ENCODE measurements at regions of chrX and their contacts with region 1.

Region 1: DNA sequence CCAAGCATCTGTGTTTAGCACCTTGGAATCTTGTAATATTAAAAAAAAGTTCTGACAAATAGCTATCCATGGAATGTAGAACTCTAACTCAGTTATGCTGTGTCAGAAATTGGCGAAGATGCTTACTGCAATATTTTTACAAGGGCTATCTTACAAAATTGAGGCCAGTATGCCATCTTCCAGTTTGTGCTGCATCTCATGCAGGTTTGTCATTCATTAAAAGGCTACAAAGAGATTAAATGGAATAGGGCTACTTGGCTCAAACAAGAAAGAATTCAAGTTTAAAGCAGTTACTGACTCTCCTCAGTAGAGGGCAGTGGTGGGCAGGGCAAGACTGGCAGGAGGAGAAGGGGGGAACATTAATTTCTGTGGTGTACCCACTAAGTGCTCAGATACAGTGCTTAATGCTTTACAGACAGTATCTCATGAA is 66.5 kb downstream of the SHROOM4 start:
- DNase-seq: no peak
- H3K4me3 ChIP-seq: no peak overlapping the region
- H3K27ac ChIP-seq: no peak overlapping the region
- H3K4me1 ChIP-seq: no peaks in the 10 kb centered on the region
- H3K27me3 ChIP-seq: peaks cover 0 to 34% of the 10 kb centered on the region in 2 donors
- CTCF ChIP-seq: peak in 2 of 3 donors; percentile 30 to 46
- POLR2A ChIP-seq: no peak

Region 2: DNA sequence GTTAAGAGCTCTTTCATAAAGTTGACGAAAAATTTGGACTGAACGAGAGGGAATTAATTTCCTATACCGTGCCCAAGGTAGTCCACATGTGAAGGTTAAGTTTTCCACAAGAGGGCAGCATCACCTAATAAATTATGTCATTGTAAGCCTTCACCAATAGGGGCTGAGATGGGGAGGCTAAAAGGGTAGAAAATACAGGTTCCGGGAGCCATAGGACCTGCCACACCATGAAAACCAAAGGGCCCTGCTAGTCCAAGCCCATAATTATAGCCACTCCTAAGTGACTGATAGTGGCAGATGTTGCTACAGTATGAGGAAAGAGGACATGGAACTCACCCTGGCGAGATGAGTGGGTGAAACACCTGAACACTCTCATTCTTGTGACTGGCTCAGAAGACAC is 55.7 kb before region 1 on chrX:
- intact Hi-C with region 1: no loop called
- DNase-seq: no peak
- H3K4me3 ChIP-seq: no peak overlapping the region
- H3K27ac ChIP-seq: no peak overlapping the region
- H3K4me1 ChIP-seq: no peaks in the 10 kb centered on the region
- H3K27me3 ChIP-seq: peaks cover 0 to 36% of the 10 kb centered on the region in 2 donors
- CTCF ChIP-seq: peak; percentile 68 to 70 (median 69)
- POLR2A ChIP-seq: no peak

Region 3: DNA sequence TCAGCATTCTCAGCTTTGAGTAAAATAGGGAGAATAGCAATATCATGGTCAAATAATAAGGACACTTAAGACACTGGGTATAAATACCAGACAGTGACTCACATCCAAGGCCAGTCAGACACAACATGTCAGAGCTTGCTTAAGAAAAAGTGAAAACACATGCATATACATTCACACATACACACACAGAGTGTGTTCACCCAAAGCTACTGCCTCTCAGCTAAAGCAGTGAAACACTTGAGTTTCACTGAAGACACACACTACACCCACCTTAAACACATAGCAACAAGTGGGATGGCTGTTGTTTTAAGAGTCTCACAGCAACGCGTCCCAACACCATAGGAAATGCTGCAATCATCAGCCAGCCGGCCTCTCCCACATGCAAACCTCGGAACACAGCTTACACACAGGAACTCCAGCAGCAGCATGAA is 52.1 kb after region 1 on chrX:
- intact Hi-C with region 1: loop called (anchors 2 kb)
- DNase-seq: no peak
- H3K4me3 ChIP-seq: no peak overlapping the region
- H3K27ac ChIP-seq: peak overlapping the region in 1 of 2 donors; percentile 7
- H3K4me1 ChIP-seq: no peaks in the 10 kb centered on the region
- H3K27me3 ChIP-seq: peaks cover 0 to 34% of the 10 kb centered on the region in 2 donors
- CTCF ChIP-seq: no peak
- POLR2A ChIP-seq: no peak

Region 4: GRCh38 chrX:52378870-52379269 is 1631.4 kb after region 1 on chrX:
- intact Hi-C with region 1: loop called (anchors 5 kb)
- DNase-seq: no peak
- H3K4me3 ChIP-seq: no peak overlapping the region
- H3K27ac ChIP-seq: no peak overlapping the region
- H3K4me1 ChIP-seq: no peaks in the 10 kb centered on the region
- H3K27me3 ChIP-seq: peaks cover 0 to 56% of the 10 kb centered on the region in 2 donors
- CTCF ChIP-seq: no peak
- POLR2A ChIP-seq: no peak

Measured in breast epithelium (tissue), 4 donors.